MCF 10A (cell line): ENCODE measurements at regions of chr11 and their contacts with region 1.

Region 1: GRCh38 chr11:124758317-124759203 is 3.5 kb downstream of the ESAM start:
- DNase-seq: peak; percentile 41
- H3K4me3 Mint-ChIP-seq: peak overlapping the region; percentile 33
- H3K27ac Mint-ChIP-seq: no peak overlapping the region
- H3K4me1 Mint-ChIP-seq: peaks cover 5% of the 10 kb centered on the region
- H3K27me3 Mint-ChIP-seq: no peaks in the 10 kb centered on the region
- CTCF ChIP-seq: peak; percentile 34

Region 2: GRCh38 chr11:124123622-124124021 is 634.9 kb before region 1 on chr11:
- CTCF ChIA-PET with region 1: no interaction called
- POLR2A ChIA-PET with region 1: no interaction called
- intact Hi-C with region 1: no loop called
- DNase-seq: no peak
- H3K4me3 Mint-ChIP-seq: no peak overlapping the region
- H3K27ac Mint-ChIP-seq: no peak overlapping the region
- H3K4me1 Mint-ChIP-seq: no peaks in the 10 kb centered on the region
- H3K27me3 Mint-ChIP-seq: no peaks in the 10 kb centered on the region
- CTCF ChIP-seq: no peak

Region 3: DNA sequence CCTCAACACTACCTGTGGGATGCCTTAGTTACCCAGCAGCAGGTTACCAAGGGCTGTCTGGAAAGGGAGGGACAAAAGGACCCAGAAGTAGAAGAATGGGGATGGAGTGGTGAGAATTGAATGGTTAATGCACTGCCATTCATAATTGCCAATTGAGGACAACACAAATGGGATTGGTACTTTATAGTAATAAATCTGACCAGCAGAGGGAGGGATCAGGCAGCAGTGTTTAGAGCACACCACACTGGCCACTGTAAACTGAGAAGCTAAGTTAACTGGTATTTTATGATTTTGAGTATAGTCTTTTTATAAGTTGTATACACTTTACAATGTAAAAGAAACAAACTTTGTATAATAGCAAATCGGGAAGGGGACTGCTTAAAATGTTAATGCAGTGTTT is 125.2 kb before region 1 on chr11:
- CTCF ChIA-PET with region 1: interaction called, 11 read pairs
- POLR2A ChIA-PET with region 1: no interaction called
- intact Hi-C with region 1: no loop called
- DNase-seq: peak; percentile 13
- H3K4me3 Mint-ChIP-seq: no peak overlapping the region
- H3K27ac Mint-ChIP-seq: no peak overlapping the region
- H3K4me1 Mint-ChIP-seq: no peaks in the 10 kb centered on the region
- H3K27me3 Mint-ChIP-seq: no peaks in the 10 kb centered on the region
- CTCF ChIP-seq: no peak

Region 4: DNA sequence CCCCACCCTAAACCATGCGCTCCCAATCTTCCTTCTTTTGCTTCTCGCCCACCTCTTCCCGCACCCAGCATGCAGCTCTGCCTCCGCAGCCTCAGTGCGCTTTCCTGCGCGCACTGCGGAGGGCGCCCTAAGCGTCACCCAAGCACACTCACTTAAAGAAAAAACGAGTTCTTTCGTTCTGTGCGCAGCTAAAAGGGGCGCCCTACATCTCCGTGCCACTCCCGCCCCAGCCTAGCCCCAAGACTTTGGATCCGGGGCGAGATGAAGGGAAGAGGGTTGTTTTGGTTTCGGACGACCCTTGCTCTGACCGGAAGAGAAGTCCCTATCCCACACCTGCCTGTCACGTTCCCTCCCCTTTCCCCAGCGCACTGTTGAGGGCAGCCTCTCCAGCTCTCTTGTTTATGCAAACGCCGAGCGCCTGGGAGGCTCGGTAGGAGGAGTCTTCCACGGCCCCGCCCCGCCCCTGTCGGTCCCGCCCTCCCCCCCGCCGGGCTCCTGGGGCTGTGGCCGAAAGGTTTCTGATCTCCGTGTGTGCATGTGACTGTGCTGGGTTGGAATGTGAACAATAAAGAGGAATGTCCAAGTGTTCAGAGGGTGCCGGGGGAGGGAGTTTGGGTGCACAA is 11.8 kb before region 1 on chr11:
- CTCF ChIA-PET with region 1: interaction called, 72 read pairs
- POLR2A ChIA-PET with region 1: interaction called, 5 read pairs
- intact Hi-C with region 1: no loop called
- DNase-seq: peak; percentile 90
- H3K4me3 Mint-ChIP-seq: peak overlapping the region; percentile 83
- H3K27ac Mint-ChIP-seq: peak overlapping the region; percentile 37
- H3K4me1 Mint-ChIP-seq: peaks cover 6% of the 10 kb centered on the region
- H3K27me3 Mint-ChIP-seq: no peaks in the 10 kb centered on the region
- CTCF ChIP-seq: peak; percentile 50

Region 5: DNA sequence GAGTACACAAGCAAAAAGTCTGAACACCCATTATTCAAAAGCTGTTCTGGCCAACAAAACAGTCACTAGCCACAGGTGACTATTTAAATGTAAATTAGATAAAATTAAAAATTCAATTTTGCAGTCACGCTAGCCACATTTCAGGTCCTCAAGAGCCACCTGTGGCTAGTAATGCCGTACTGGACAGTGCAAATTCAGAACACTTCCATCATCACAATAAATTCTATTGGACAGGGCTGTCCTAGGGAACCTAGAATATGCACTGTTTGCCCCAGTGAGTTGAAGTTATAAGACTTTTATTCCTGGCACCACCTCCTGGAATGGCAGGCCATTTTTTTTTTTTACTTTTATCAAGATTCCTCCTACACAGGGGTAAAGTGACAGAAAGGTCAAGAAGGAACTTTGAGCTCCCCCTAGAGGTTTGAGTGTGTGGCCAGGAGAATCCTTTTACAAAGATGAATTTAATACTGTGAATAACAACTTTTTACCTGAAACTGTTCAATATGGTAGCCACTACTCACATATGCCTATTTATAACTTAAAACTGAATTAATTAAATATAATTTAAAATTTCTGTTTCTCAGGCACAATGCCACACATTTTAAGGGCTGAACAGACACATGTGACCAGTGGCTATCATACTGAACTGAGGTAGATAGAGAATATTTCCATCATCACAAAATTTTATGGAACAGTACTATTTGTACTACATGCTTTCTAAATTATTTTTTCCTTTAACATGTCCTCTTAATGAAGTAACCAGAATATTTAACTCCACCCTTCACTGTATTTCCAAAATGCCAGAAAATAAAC is 35.1 kb after region 1 on chr11:
- CTCF ChIA-PET with region 1: interaction called, 50 read pairs
- POLR2A ChIA-PET with region 1: no interaction called
- intact Hi-C with region 1: loop called (anchors 2 kb)
- DNase-seq: peak; percentile 73
- H3K4me3 Mint-ChIP-seq: no peak overlapping the region
- H3K27ac Mint-ChIP-seq: no peak overlapping the region
- H3K4me1 Mint-ChIP-seq: peaks cover 25% of the 10 kb centered on the region
- H3K27me3 Mint-ChIP-seq: no peaks in the 10 kb centered on the region
- CTCF ChIP-seq: peak; percentile 60

Region 6: DNA sequence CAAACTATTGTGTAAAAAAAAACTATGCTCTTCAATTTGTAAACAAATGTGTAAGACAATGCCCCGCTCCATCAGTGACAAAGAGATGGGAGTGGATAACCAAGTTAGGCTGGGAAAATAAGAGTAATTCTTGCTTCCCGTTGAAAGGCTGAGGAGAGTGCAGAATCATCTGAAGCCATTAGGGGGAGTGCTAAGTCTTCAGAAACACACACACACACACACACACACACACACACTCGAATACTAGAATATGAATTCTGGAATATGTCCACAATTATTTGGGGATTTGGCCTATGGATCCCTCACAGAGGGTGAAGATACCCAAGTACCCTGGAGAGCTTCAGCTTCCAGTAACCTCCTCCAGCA is 78.9 kb after region 1 on chr11:
- CTCF ChIA-PET with region 1: interaction called, 46 read pairs
- POLR2A ChIA-PET with region 1: no interaction called
- intact Hi-C with region 1: loop called (anchors 1 kb)
- DNase-seq: peak; percentile 80
- H3K4me3 Mint-ChIP-seq: no peak overlapping the region
- H3K27ac Mint-ChIP-seq: no peak overlapping the region
- H3K4me1 Mint-ChIP-seq: peaks cover 4% of the 10 kb centered on the region
- H3K27me3 Mint-ChIP-seq: peaks cover 27% of the 10 kb centered on the region
- CTCF ChIP-seq: peak; percentile 26